ENCODE measurements at regions of chr1 and their contacts with region 1.

Region 1: GRCh38 chr1:3423245-3423829 is 31.1 kb upstream of the ARHGEF16 start:
- DNase-seq: no peak
- H3K4me3 ChIP-seq: no peak overlapping the region
- H3K27ac ChIP-seq: no peak overlapping the region
- H3K4me1 ChIP-seq: no peaks in the 10 kb centered on the region
- H3K27me3 ChIP-seq: no peaks in the 10 kb centered on the region
- CTCF ChIP-seq: no peak
- POLR2A ChIP-seq: no peak

Region 2: DNA sequence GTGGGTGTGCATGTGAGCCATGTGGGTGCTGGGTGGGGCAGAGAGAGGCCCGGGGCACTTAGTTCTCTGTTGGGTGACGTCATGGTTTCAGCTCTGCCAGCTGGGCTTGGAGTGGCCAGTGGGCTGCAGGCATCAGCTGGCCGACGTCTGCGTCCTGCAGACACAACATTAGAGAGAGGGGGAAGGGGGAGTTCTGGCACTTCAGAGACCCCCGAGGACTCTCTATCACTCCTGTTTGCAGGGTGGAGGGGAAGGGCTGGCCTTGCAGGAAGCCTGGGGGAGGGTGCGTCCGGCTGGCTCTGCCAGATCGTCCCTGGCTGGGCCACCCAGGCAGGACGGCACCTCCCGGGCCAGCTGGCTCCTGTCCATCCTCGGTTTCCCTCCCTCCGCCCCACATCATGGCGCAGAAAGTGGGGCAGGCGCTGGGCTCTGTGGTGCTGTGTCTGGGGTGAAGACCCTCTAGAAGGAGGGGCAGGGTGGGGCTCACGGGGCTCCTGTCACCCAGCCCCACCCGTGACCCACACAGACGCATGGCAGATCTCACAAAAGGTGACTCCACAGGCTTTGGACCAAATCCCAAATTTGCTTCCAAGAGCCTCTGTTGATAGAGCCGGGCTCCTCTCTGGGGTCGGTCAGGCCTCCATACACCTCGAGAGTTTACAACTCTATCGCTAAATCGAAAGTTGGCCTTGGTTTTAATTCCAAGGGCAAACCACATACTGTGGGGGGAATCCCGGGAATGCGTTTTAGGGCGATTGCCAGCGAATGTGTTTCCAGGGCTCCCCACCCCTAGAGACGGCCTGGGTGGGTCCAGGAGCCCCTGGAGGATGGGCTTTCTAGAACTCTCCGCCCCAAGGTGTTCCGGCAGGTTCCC is 548.5 kb before region 1 on chr1:
- intact Hi-C with region 1: loop called (anchors 5 kb)
- DNase-seq: no peak
- H3K4me3 ChIP-seq: peak overlapping the region in 1 of 2 donors; percentile 11
- H3K27ac ChIP-seq: no peak overlapping the region
- H3K4me1 ChIP-seq: peaks cover 15% of the 10 kb centered on the region
- H3K27me3 ChIP-seq: no peaks in the 10 kb centered on the region
- CTCF ChIP-seq: no peak
- POLR2A ChIP-seq: no peak

Region 3: GRCh38 chr1:3352299-3352951 is 70.9 kb before region 1 on chr1:
- intact Hi-C with region 1: no loop called
- DNase-seq: no peak
- H3K4me3 ChIP-seq: peak overlapping the region in 1 of 2 donors; percentile 28
- H3K27ac ChIP-seq: peak overlapping the region; percentile 74
- H3K4me1 ChIP-seq: peaks cover 18% of the 10 kb centered on the region
- H3K27me3 ChIP-seq: no peaks in the 10 kb centered on the region
- CTCF ChIP-seq: no peak
- POLR2A ChIP-seq: no peak

Region 4: GRCh38 chr1:3471302-3472087 is 48.2 kb after region 1 on chr1:
- intact Hi-C with region 1: no loop called
- DNase-seq: no peak
- H3K4me3 ChIP-seq: no peak overlapping the region
- H3K27ac ChIP-seq: peak overlapping the region; percentile 54
- H3K4me1 ChIP-seq: peaks cover 72% of the 10 kb centered on the region
- H3K27me3 ChIP-seq: no peaks in the 10 kb centered on the region
- CTCF ChIP-seq: peak in 1 of 3 experiments; percentile 9
- POLR2A ChIP-seq: no peak